ENCODE measurements at regions of chr5 and their contacts with region 1.

Region 1: DNA sequence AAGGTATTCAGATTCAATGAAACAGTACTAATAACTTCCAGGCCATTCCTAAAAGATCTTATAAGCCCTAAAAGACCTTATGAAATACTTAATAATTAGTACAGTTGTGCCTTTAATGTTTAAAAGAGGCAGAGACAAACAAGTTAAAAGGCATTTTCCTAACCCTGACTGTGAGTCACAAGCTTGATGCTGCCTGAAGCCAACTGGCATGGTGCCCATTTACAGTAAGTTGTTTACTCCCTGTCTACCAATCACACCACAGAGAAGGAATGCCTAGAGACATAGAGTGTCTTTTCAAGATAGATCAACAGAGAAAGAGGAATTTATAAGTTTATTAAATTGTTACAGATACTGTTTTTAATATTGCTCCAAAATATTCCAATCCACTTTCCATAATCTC is 47.8 kb downstream of the NR3C1 start:
- DNase-seq: peak in 7 of 9 donors; percentile 43 to 82 (median 63)
- ATAC-seq: peak; percentile 85
- H3K4me3 ChIP-seq: no peak overlapping the region
- H3K4me3 Mint-ChIP-seq: peak overlapping the region in 8 of 10 donors; percentile 9 to 51 (median 39)
- H3K27ac ChIP-seq: no peak overlapping the region
- H3K27ac Mint-ChIP-seq: peak overlapping the region in 8 of 9 donors; percentile 33 to 92 (median 79)
- H3K4me1 ChIP-seq: peaks cover 53 to 60% of the 10 kb centered on the region in 2 donors
- H3K4me1 Mint-ChIP-seq: peaks cover 7 to 84% (median 56%) of the 10 kb centered on the region in 7 donors
- H3K27me3 ChIP-seq: no peaks in the 10 kb centered on the region
- H3K27me3 Mint-ChIP-seq: no peaks in the 10 kb centered on the region

Region 2: DNA sequence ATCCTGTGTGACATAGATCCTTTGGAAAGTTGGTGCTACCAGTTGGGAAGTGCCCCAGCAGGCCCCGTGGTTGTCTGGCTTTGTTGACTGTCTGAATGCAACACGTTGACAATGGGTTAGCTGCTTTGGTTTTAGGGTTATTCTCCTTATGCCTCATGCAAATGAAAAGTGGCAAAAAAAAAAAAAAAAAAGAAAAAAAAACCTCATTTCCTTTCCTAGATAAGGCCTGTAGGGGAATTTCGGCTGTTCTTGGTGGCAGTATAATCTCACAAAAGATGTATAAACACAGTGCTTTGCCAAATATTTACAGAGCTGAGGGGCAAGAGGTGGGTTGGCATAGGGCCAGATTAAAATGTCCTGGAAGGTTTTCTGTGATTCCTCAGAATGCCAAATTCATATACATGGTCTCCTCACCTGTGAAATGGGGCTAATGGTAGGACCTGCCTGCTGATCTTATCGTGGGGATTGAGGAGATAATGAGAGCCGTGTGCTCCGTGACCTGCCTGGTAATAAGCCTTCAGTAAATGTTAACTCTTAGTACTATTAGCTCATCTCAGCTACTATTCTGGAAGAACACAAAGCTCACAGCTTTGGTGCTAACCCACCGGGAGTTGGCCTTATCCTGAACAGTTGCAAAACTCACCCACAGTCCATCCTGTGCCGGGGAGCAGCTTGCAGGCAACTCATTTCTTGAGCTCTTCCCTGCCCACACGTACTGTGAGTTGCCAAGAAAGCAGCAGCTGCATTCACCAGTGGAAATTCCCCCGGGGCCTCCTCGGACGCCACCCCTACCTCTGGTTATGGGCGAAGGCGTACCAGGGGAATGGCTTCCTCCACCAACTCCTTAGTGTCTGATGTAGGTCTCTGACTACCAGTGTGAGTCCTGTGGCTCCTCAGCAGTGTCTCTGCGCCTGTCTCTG is 172.6 kb before region 1 on chr5:
- CTCF ChIA-PET with region 1: no interaction called
- POLR2A ChIA-PET with region 1: no interaction called
- intact Hi-C with region 1: loop called in 1 of 2 experiments (anchors 5 kb)
- DNase-seq: peak in 1 of 9 donors; percentile 80
- ATAC-seq: peak; percentile 61
- H3K4me3 ChIP-seq: no peak overlapping the region
- H3K4me3 Mint-ChIP-seq: peak overlapping the region in 1 of 10 donors; percentile 66
- H3K27ac ChIP-seq: no peak overlapping the region
- H3K27ac Mint-ChIP-seq: peak overlapping the region in 1 of 9 donors; percentile 89
- H3K4me1 ChIP-seq: peaks cover 3 to 22% of the 10 kb centered on the region in 2 donors
- H3K4me1 Mint-ChIP-seq: peaks cover 6 to 65% (median 16%) of the 10 kb centered on the region in 7 donors
- H3K27me3 ChIP-seq: no peaks in the 10 kb centered on the region
- H3K27me3 Mint-ChIP-seq: no peaks in the 10 kb centered on the region

Region 3: GRCh38 chr5:143222287-143223231 is 133.2 kb before region 1 on chr5:
- CTCF ChIA-PET with region 1: no interaction called
- POLR2A ChIA-PET with region 1: no interaction called
- intact Hi-C with region 1: loop called in 1 of 2 experiments (anchors 5 kb)
- DNase-seq: peak; percentile 13 to 55 (median 27)
- ATAC-seq: peak; percentile 81
- H3K4me3 ChIP-seq: peak overlapping the region; percentile 7
- H3K4me3 Mint-ChIP-seq: peak overlapping the region; percentile 9 to 80 (median 54)
- H3K27ac ChIP-seq: peak overlapping the region; percentile 40
- H3K27ac Mint-ChIP-seq: peak overlapping the region; percentile 60 to 94 (median 88)
- H3K4me1 ChIP-seq: peaks cover 0 to 30% of the 10 kb centered on the region in 2 donors
- H3K4me1 Mint-ChIP-seq: peaks cover 33 to 76% (median 40%) of the 10 kb centered on the region in 7 donors
- H3K27me3 ChIP-seq: no peaks in the 10 kb centered on the region
- H3K27me3 Mint-ChIP-seq: no peaks in the 10 kb centered on the region

Region 4: DNA sequence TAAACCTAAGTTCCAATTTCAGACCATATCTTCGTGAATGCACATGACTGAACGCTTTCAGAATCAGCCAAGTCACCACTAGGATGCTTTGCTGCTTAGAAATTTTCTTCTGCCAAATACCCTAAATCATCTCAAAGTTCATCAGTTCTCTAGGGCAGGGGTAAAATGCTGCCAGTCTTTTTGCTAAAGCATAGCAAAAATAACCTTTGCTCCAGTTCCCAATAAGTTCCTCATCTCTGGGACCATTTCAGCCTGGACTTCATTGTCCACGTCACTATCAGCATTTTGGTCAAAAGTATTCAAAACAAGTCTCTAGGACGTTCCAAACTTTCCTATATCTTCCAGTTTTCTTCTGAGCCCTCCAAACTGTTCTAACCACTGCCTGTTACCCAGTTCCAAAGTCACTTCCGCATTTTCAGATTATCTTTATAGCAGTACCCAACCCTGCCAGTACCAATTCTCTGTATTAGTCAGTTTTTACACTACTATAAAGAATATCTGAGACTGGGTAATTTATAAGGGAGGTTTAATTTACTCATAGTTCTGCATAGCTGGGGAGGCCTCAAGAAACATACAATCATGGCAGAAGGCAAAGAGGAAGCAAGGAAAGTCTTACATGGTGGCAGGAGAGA is 27.0 kb before region 1 on chr5:
- CTCF ChIA-PET with region 1: no interaction called
- POLR2A ChIA-PET with region 1: no interaction called
- intact Hi-C with region 1: loop called in 1 of 2 experiments (anchors 2 kb)
- DNase-seq: no peak
- ATAC-seq: no peak
- H3K4me3 ChIP-seq: no peak overlapping the region
- H3K4me3 Mint-ChIP-seq: peak overlapping the region in 3 of 10 donors; percentile 35 to 60 (median 41)
- H3K27ac ChIP-seq: no peak overlapping the region
- H3K27ac Mint-ChIP-seq: peak overlapping the region in 1 of 9 donors; percentile 63
- H3K4me1 ChIP-seq: peaks cover 5% of the 10 kb centered on the region in 2 donors
- H3K4me1 Mint-ChIP-seq: peaks cover 29 to 71% (median 55%) of the 10 kb centered on the region in 7 donors
- H3K27me3 ChIP-seq: no peaks in the 10 kb centered on the region
- H3K27me3 Mint-ChIP-seq: no peaks in the 10 kb centered on the region

Region 5: GRCh38 chr5:143341807-143342570 is 13.7 kb before region 1 on chr5:
- CTCF ChIA-PET with region 1: interaction called, 4 read pairs
- POLR2A ChIA-PET with region 1: interaction called, 3 read pairs
- intact Hi-C with region 1: loop called in 1 of 2 experiments (anchors 1 kb)
- DNase-seq: no peak
- ATAC-seq: no peak
- H3K4me3 ChIP-seq: no peak overlapping the region
- H3K4me3 Mint-ChIP-seq: peak overlapping the region in 2 of 10 donors; percentile 4 to 8
- H3K27ac ChIP-seq: no peak overlapping the region
- H3K27ac Mint-ChIP-seq: peak overlapping the region in 1 of 9 donors; percentile 5
- H3K4me1 ChIP-seq: peaks cover 6 to 8% of the 10 kb centered on the region in 2 donors
- H3K4me1 Mint-ChIP-seq: peaks cover 26 to 57% (median 56%) of the 10 kb centered on the region in 7 donors
- H3K27me3 ChIP-seq: no peaks in the 10 kb centered on the region
- H3K27me3 Mint-ChIP-seq: no peaks in the 10 kb centered on the region

Region 6: GRCh38 chr5:143372187-143372829 is 16.6 kb after region 1 on chr5:
- CTCF ChIA-PET with region 1: no interaction called
- POLR2A ChIA-PET with region 1: no interaction called
- intact Hi-C with region 1: loop called in 1 of 2 experiments (anchors 2 kb)
- DNase-seq: no peak
- ATAC-seq: no peak
- H3K4me3 ChIP-seq: no peak overlapping the region
- H3K4me3 Mint-ChIP-seq: peak overlapping the region in 1 of 10 donors; percentile 41
- H3K27ac ChIP-seq: no peak overlapping the region
- H3K27ac Mint-ChIP-seq: peak overlapping the region in 3 of 9 donors; percentile 22 to 38 (median 31)
- H3K4me1 ChIP-seq: peaks cover 7 to 10% of the 10 kb centered on the region in 2 donors
- H3K4me1 Mint-ChIP-seq: peaks cover 41 to 98% (median 94%) of the 10 kb centered on the region in 7 donors
- H3K27me3 ChIP-seq: no peaks in the 10 kb centered on the region
- H3K27me3 Mint-ChIP-seq: no peaks in the 10 kb centered on the region

Region 7: GRCh38 chr5:143386725-143387124 is 31.0 kb after region 1 on chr5:
- CTCF ChIA-PET with region 1: no interaction called
- POLR2A ChIA-PET with region 1: no interaction called
- intact Hi-C with region 1: no loop called
- DNase-seq: no peak
- ATAC-seq: no peak
- H3K4me3 ChIP-seq: no peak overlapping the region
- H3K4me3 Mint-ChIP-seq: peak overlapping the region in 4 of 10 donors; percentile 5 to 23 (median 18)
- H3K27ac ChIP-seq: no peak overlapping the region
- H3K27ac Mint-ChIP-seq: peak overlapping the region in 3 of 9 donors; percentile 12 to 70 (median 37)
- H3K4me1 ChIP-seq: peaks cover 13 to 17% of the 10 kb centered on the region in 2 donors
- H3K4me1 Mint-ChIP-seq: peaks cover 35 to 97% (median 83%) of the 10 kb centered on the region in 7 donors
- H3K27me3 ChIP-seq: no peaks in the 10 kb centered on the region
- H3K27me3 Mint-ChIP-seq: no peaks in the 10 kb centered on the region